ENCODE measurements at regions of chr1 and their contacts with region 1.

Region 1: GRCh38 chr1:150995896-150996295 is 10.8 kb downstream of the MINDY1 start:
- DNase-seq: peak; percentile 31
- H3K4me3 ChIP-seq: no peak overlapping the region
- H3K27ac ChIP-seq: no peak overlapping the region
- H3K4me1 ChIP-seq: no peaks in the 10 kb centered on the region
- H3K27me3 ChIP-seq: no peaks in the 10 kb centered on the region
- CTCF ChIP-seq: peak; percentile 75

Region 2: GRCh38 chr1:150268705-150269403 is 727.0 kb before region 1 on chr1 and contains the start of gene APH1A:
- CTCF ChIA-PET with region 1: no interaction called
- POLR2A ChIA-PET with region 1: no interaction called
- intact Hi-C with region 1: no loop called
- DNase-seq: peak; percentile 99
- H3K4me3 ChIP-seq: peak within 1 kb of the TSS; percentile 96
- H3K27ac ChIP-seq: peak within 1 kb of the TSS; percentile 91
- H3K4me1 ChIP-seq: peaks cover 26% of the 10 kb centered on the region
- H3K27me3 ChIP-seq: no peaks in the 10 kb centered on the region
- CTCF ChIP-seq: no peak
- total RNA-seq, gene APH1A: 136 and 144 TPM in 2 replicates

Region 3: GRCh38 chr1:150477733-150478132 is 518.2 kb before region 1 on chr1:
- CTCF ChIA-PET with region 1: no interaction called
- POLR2A ChIA-PET with region 1: no interaction called
- intact Hi-C with region 1: loop called (anchors 10 kb)
- DNase-seq: no peak
- H3K4me3 ChIP-seq: no peak overlapping the region
- H3K27ac ChIP-seq: no peak overlapping the region
- H3K4me1 ChIP-seq: no peaks in the 10 kb centered on the region
- H3K27me3 ChIP-seq: no peaks in the 10 kb centered on the region
- CTCF ChIP-seq: no peak

Region 4: DNA sequence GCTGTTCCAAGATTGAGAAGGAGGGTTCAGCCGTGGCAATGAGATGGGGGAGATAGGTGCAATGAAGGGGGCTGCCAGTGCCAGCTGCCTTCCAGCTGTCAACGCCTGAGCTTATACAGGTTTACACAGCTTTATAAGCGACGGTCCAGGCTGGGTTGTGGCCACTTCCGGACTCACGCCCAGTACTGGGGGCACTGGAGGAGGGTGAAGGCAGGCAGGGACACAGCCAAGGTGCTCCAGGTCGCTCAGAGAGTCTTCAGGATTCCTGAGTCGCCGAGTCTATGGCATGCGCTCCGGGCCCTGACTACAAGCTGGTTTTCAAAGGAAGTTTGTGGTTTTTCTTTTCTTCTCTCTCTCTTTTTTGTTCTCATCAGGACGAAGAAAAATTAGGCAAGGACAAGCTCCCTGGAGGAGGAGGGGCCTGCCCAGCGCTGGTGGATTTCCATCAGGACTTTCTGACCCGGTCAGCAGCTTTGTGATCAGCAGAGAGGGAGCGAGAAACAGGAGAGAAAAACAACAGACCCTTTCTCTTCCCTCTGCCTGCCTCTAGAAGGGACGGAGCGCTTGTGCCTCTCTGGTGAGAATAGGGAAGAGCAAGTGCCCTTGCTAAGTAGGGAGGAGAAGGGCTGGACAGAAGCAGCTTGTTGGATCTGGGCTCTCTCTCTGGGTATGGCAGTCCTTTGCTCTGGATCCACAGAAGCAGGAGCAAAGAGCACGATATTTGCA is 10.6 kb after region 1 on chr1 and contains the start of gene MINDY1:
- CTCF ChIA-PET with region 1: interaction called, 26 read pairs
- POLR2A ChIA-PET with region 1: interaction called, 3 read pairs
- intact Hi-C with region 1: no loop called
- DNase-seq: peak; percentile 87
- H3K4me3 ChIP-seq: peak within 1 kb of the TSS; percentile 95
- H3K27ac ChIP-seq: peak within 1 kb of the TSS; percentile 90
- H3K4me1 ChIP-seq: peaks cover 24% of the 10 kb centered on the region
- H3K27me3 ChIP-seq: no peaks in the 10 kb centered on the region
- CTCF ChIP-seq: peak; percentile 51
- total RNA-seq, gene MINDY1: 11.6 and 16.9 TPM in 2 replicates